IMR-90 (cell line): ENCODE measurements at regions of chr2 and their contacts with region 1.

Region 1: GRCh38 chr2:170409164-170409535 is 231.2 kb downstream of the MYO3B start:
- DNase-seq: peak; percentile 61
- ATAC-seq: peak; percentile 62
- H3K4me3 ChIP-seq: no peak overlapping the region
- H3K27ac ChIP-seq: no peak overlapping the region
- H3K4me1 ChIP-seq: no peaks in the 10 kb centered on the region
- H3K27me3 ChIP-seq: no peaks in the 10 kb centered on the region; the same call in 1 of the 2 replicates
- CTCF ChIP-seq: peak; percentile 76
- POLR2A ChIP-seq: no peak
- RAD21 ChIP-seq: peak; percentile 66

Region 2: DNA sequence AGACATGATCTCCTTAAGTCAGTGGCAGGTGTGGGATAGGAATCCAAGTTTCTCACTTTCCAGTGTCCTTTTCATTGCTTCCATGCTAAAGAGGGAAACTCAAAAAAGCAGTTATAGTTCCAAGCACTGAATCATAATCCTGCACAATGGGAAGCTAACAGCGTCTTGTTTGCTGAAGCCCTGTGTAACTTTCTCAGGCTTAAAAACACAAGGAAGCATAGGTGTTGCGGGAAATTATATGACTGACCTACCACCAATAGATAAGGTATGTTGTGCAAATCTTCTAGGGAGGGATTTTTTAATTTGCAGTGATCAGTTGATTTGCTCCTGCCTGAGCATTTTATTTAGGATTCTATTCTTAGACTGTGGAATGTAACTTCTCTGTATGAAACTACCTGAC is 19.7 kb after region 1 on chr2:
- CTCF ChIA-PET with region 1: no interaction called
- POLR2A ChIA-PET with region 1: no interaction called
- dilution Hi-C with region 1: no loop called
- in situ Hi-C with region 1: no loop called
- intact Hi-C with region 1: no loop called
- DNase-seq: no peak
- ATAC-seq: no peak
- H3K4me3 ChIP-seq: no peak overlapping the region
- H3K27ac ChIP-seq: no peak overlapping the region
- H3K4me1 ChIP-seq: no peaks in the 10 kb centered on the region
- H3K27me3 ChIP-seq: no peaks in the 10 kb centered on the region
- CTCF ChIP-seq: no peak
- POLR2A ChIP-seq: no peak
- RAD21 ChIP-seq: no peak

Region 3: DNA sequence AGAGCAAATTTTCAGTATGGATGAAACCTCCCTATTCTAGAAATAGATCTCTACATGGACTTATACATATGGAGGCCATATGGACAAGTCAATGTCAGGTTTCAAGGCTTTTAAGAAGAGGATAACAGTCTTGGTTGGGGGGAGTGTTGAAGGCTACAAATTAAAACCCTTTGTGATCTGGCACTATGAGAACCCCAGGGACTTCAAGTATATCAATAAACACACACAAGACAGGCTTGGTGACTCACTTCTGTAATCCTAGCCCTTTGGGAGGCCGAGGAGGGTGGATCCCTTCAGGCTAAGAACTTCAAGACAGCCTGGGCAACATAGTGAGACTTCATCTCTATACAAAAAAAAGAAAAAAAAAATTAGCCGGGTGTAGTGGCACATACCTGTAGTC is 178.8 kb after region 1 on chr2:
- CTCF ChIA-PET with region 1: no interaction called
- POLR2A ChIA-PET with region 1: no interaction called
- dilution Hi-C with region 1: no loop called
- in situ Hi-C with region 1: no loop called
- intact Hi-C with region 1: no loop called
- DNase-seq: no peak
- ATAC-seq: no peak
- H3K4me3 ChIP-seq: no peak overlapping the region
- H3K27ac ChIP-seq: no peak overlapping the region
- H3K4me1 ChIP-seq: no peaks in the 10 kb centered on the region
- H3K27me3 ChIP-seq: no peaks in the 10 kb centered on the region
- CTCF ChIP-seq: no peak
- POLR2A ChIP-seq: no peak
- RAD21 ChIP-seq: no peak

Region 4: GRCh38 chr2:170707821-170708795 is 299.0 kb after region 1 on chr2:
- CTCF ChIA-PET with region 1: no interaction called
- POLR2A ChIA-PET with region 1: no interaction called
- dilution Hi-C with region 1: no loop called
- in situ Hi-C with region 1: no loop called
- intact Hi-C with region 1: loop called (anchors 10 kb)
- DNase-seq: no peak
- ATAC-seq: no peak
- H3K4me3 ChIP-seq: no peak overlapping the region
- H3K27ac ChIP-seq: no peak overlapping the region
- H3K4me1 ChIP-seq: no peaks in the 10 kb centered on the region
- H3K27me3 ChIP-seq: peaks cover 38% of the 10 kb centered on the region
- CTCF ChIP-seq: no peak
- POLR2A ChIP-seq: no peak
- RAD21 ChIP-seq: no peak